ENCODE measurements at regions of chr6 and their contacts with region 1.

Region 1: GRCh38 chr6:122869437-122870024 is 80.5 kb downstream of the SMPDL3A start:
- DNase-seq: peak; percentile 73

Region 2: GRCh38 chr6:122845916-122846612 is 23.5 kb before region 1 on chr6:
- CTCF ChIA-PET with region 1: no interaction called
- POLR2A ChIA-PET with region 1: no interaction called
- DNase-seq: no peak

Region 3: DNA sequence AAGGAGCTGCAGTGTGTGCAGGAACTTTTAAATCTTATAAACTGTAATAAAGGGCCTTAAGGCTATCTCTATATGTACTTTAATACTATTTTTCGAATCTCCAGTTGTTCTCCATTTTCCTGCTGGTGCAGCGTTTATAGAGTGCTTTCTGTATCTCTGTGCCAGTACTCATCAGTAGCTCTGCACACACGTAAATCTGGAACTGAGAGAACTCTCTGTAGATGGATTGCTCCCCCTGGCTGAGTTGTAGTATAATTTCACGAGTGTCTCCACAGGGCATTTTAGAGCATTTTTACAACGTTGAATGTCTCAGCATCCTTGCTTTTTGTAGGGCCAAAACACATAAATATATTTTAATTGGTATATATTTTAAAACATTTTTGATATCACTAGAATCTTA is 510.7 kb after region 1 on chr6:
- CTCF ChIA-PET with region 1: interaction called, 31 read pairs
- POLR2A ChIA-PET with region 1: no interaction called
- DNase-seq: peak; percentile 59

Measured in HEK293T (cell line).